ENCODE measurements at regions of chr4 and their contacts with region 1.

Region 1: GRCh38 chr4:16916719-16917337 is 18.4 kb upstream of the LDB2 start:
- DNase-seq: no peak
- ATAC-seq: no peak
- H3K4me3 ChIP-seq: no peak overlapping the region
- H3K27ac ChIP-seq: no peak overlapping the region
- H3K4me1 ChIP-seq: no peaks in the 10 kb centered on the region
- H3K27me3 ChIP-seq: no peaks in the 10 kb centered on the region

Region 2: DNA sequence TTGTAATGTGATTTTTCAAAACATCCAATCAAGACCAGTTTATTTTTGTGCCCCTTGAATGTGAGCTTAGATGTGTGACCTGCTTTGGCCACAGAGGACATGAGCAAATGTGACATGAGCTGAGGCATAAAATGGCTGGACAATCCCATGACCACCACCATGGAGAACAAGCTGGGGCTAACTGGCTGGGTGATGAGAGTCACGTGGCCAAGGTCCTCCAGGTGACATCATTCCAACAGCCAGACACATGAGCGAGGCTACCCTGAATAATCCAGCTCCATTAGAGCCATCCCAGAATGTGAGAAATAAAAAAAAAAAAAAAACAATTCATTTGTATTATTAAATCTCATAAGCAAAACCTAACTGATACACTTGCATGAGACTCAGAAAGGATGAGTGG is 72.0 kb after region 1 on chr4:
- intact Hi-C with region 1: no loop called
- DNase-seq: no peak
- ATAC-seq: no peak
- H3K4me3 ChIP-seq: no peak overlapping the region
- H3K27ac ChIP-seq: no peak overlapping the region
- H3K4me1 ChIP-seq: peaks cover 0 to 3% of the 10 kb centered on the region in 2 donors
- H3K27me3 ChIP-seq: no peaks in the 10 kb centered on the region

Region 3: DNA sequence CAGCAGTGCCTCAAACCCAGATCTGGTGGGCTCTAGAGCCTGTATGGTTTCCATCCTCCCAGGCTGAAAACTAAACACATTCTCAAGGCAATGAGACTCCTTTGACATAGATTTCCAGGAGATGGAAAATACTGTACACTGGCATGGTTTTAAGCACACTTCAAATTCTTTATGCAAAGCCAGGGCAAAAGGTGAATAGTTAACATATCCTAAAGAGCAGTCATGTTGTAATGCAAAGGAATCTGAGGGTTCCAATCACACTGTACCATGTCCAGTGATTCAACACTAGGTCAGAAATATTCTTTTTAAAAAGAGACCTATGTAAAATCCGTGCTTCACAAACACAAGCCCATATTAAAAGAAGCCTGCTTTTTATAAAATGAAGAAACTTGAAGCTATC is 399.7 kb after region 1 on chr4:
- intact Hi-C with region 1: loop called in 1 of 2 experiments (anchors 5 kb)
- DNase-seq: no peak
- ATAC-seq: no peak
- H3K4me3 ChIP-seq: no peak overlapping the region
- H3K27ac ChIP-seq: no peak overlapping the region
- H3K4me1 ChIP-seq: no peaks in the 10 kb centered on the region
- H3K27me3 ChIP-seq: no peaks in the 10 kb centered on the region